ENCODE measurements at regions of chr19 and their contacts with region 1.

Region 1: DNA sequence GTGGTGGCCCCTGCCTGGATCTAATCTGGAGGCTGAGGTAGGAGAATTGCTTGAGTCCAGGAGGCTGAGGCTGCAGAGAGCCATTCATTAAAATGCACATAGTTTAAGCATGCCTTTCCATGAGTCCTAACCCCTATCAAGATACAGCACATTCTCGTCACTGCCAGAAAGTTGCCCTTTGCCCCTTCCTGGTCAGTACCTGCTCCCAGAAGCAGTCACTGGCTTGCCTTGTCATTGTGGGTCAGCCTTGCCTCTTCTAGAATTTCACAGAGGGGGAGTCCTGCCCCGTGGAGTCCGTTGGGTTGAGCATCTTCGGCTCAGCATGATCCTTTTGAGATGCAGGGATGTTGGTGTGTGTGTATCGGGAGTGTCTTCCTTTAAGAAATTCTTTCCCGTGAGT is 10.8 kb downstream of the BICRA start:
- DNase-seq: no peak

Region 2: DNA sequence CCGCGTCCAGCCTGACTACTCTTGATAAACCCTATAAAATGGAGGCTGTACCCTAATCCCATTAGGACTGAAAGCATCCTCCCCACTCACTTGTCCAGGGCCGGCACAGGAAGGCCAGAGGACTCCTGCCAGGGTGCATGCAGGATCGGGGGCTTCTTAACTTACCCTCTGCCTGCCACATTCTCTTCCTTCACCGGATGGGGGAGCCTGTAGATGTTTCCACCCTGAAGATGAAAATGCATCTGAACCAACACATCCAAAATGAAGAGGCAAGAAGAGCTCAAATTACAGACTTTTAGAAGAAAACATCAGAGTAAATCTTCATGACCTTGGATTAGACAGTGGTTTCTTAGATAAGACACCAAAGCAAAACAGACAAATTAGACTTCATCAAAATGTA is 79.0 kb before region 1 on chr19:
- intact Hi-C with region 1: no loop called
- DNase-seq: no peak

Region 3: GRCh38 chr19:47658431-47659348 is 38.9 kb after region 1 on chr19:
- intact Hi-C with region 1: loop called (anchors 5 kb)
- DNase-seq: peak in 4 of 10 donors; percentile 16 to 83 (median 76)